H1 (cell line): ENCODE measurements at regions of chr17 and their contacts with region 1.

Region 1: DNA sequence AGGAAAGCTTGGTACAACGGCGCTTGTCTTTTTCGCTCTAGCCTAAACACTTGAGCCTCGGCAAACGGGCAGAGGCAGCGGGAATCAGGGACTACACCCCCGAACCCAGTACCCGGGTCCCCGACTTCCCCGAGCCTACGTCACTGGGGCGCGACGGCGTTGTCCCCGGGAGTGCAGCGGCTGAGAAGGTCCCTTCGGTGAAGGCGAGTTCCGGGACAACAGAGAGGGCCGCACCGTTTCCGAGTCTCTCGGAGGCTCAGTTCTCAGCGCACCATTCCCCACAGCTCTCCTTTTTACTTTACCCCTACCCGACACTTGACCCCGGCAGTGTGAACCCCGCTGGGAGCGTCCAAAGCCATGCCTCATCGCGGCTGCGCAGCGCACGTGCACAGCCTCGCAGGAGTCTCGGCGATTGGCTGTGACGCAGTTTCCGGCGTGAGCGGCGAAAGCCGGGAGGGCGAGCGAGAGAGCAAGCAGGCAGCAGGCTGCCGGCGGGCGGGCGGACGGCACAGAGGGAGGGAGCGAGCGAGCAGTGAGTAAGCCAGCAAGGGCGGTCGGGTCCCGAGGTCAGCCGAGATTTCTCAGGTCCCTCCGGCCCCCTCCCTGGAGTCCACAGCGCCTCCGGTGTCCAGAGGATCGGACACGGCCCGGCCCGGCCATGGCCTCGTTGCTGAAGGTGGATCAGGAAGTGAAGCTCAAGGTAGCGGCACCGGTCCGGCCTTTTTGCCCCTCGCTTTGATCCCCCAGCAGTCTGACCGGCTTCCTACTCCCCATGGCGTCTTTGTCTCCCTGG is at the start of gene PSME3:
- DNase-seq: peak; percentile 54 to 96
- H3K4me3 ChIP-seq: peak within 1 kb of the TSS; percentile 75 to 99 (median 96)
- H3K27ac ChIP-seq: peak within 1 kb of the TSS; percentile 99
- H3K4me1 ChIP-seq: peaks cover 0 to 2% (median 0%) of the 10 kb centered on the region in 4 experiments; a peak in 2 of 7 replicates
- H3K27me3 ChIP-seq: no peaks in the 10 kb centered on the region
- CTCF ChIP-seq: no peak
- EP300 ChIP-seq: no peak
- POLR2A ChIP-seq: peak; percentile 87 to 94
- RAD21 ChIP-seq: no peak; a peak in 1 of 4 replicates
- total RNA-seq, gene PSME3: 223 and 224 TPM in 2 replicates

Region 2: GRCh38 chr17:42784811-42785592 is 48.2 kb before region 1 on chr17:
- CTCF ChIA-PET with region 1: no interaction called
- POLR2A ChIA-PET with region 1: no interaction called
- DNase-seq: no peak
- H3K4me3 ChIP-seq: no peak overlapping the region
- H3K27ac ChIP-seq: no peak overlapping the region
- H3K4me1 ChIP-seq: peaks cover 0 to 13% (median 7%) of the 10 kb centered on the region in 4 experiments; a peak in 6 of 7 replicates
- H3K27me3 ChIP-seq: peaks cover 6 to 26% (median 19%) of the 10 kb centered on the region in 4 experiments
- CTCF ChIP-seq: no peak
- EP300 ChIP-seq: no peak
- POLR2A ChIP-seq: no peak
- RAD21 ChIP-seq: no peak

Region 3: GRCh38 chr17:42928714-42929496 is 95.7 kb after region 1 on chr17:
- CTCF ChIA-PET with region 1: interaction called, 16 read pairs
- POLR2A ChIA-PET with region 1: interaction called, 5 read pairs
- DNase-seq: peak in 1 of 2 experiments; percentile 54
- H3K4me3 ChIP-seq: no peak overlapping the region
- H3K27ac ChIP-seq: peak overlapping the region; percentile 21; the same call in 1 of the 2 replicates
- H3K4me1 ChIP-seq: peaks cover 0 to 5% (median 1%) of the 10 kb centered on the region in 4 experiments; a peak in 3 of 7 replicates
- H3K27me3 ChIP-seq: no peaks in the 10 kb centered on the region
- CTCF ChIP-seq: peak; percentile 38 to 65 (median 62)
- EP300 ChIP-seq: no peak
- POLR2A ChIP-seq: peak in 1 of 2 experiments; percentile 34; a peak in 1 of 3 replicates
- RAD21 ChIP-seq: peak; percentile 72 to 76

Region 4: GRCh38 chr17:42937712-42938596 is 104.8 kb after region 1 on chr17:
- CTCF ChIA-PET with region 1: interaction called, 13 read pairs
- POLR2A ChIA-PET with region 1: interaction called, 4 read pairs
- DNase-seq: peak; percentile 25 to 55
- H3K4me3 ChIP-seq: no peak overlapping the region
- H3K27ac ChIP-seq: no peak overlapping the region
- H3K4me1 ChIP-seq: no peaks in the 10 kb centered on the region
- H3K27me3 ChIP-seq: no peaks in the 10 kb centered on the region
- CTCF ChIP-seq: peak; percentile 47 to 87 (median 85)
- EP300 ChIP-seq: no peak
- POLR2A ChIP-seq: no peak
- RAD21 ChIP-seq: peak; percentile 96

Region 5: DNA sequence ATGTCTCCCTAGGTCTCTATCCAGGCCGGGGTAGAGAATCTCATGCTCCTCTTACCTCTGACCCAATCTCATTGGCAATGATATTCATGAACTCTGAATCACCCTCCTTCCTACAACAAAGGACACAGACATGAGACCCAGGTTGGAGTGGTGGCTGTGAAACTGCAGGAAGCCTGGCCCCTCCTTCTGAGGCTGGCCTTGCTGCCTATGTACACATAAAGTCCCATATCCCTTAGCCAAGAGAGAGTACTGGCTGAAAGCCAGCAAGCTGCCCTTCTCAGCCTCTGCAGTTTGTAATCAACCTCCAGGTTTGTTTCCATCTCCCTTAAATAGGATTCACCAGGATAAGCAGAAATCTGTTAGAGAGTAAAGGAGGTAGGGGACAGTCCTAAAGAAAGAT is 120.5 kb after region 1 on chr17:
- CTCF ChIA-PET with region 1: no interaction called
- POLR2A ChIA-PET with region 1: interaction called, 11 read pairs
- DNase-seq: no peak
- H3K4me3 ChIP-seq: no peak overlapping the region
- H3K27ac ChIP-seq: no peak overlapping the region
- H3K4me1 ChIP-seq: no peaks in the 10 kb centered on the region
- H3K27me3 ChIP-seq: no peaks in the 10 kb centered on the region
- CTCF ChIP-seq: no peak
- EP300 ChIP-seq: no peak
- POLR2A ChIP-seq: no peak
- RAD21 ChIP-seq: no peak